ENCODE measurements at regions of chr12 and their contacts with region 1.

Region 1: DNA sequence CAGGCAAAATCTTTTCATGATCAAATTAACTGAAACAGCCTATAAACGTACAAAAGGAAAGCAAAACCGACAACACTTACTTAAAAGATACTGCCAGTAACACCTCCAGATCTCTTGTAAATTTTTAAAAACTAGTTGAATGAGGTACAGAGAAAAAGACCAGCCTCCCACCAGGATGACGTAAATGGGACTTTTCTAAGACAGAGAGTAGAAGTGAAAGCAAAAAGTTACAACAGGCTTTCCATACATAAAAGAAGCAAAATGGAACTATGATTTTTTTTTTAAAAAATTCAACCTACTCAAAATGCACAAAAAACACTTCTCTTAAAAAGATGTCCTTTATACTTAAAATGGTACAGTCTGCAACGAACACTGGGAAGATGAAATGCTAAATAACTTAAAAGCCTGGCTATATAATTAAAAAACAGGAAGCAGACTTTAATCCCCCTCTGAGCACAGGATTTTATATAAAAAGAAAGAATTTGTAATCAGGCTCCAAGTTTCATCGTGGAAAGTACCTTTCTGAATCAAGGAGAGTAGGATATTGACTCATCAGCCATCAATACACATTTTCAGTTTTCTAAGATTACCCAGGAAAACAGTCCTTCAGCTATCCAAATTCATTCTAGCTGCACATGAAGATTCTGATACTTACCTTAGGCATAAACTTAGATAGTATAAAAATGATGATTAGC is 14.2 kb upstream of the MYO1A start:
- DNase-seq: peak in 7 of 9 donors; percentile 67 to 90 (median 85)
- ATAC-seq: peak; percentile 97
- H3K4me3 ChIP-seq: peak overlapping the region; percentile 15
- H3K4me3 Mint-ChIP-seq: peak overlapping the region; percentile 13 to 90 (median 80)
- H3K27ac ChIP-seq: peak overlapping the region; percentile 76
- H3K27ac Mint-ChIP-seq: peak overlapping the region; percentile 79 to 97 (median 91)
- H3K4me1 ChIP-seq: peaks cover 17 to 20% of the 10 kb centered on the region in 2 donors
- H3K4me1 Mint-ChIP-seq: peaks cover 10 to 45% (median 34%) of the 10 kb centered on the region in 7 donors
- H3K27me3 ChIP-seq: no peaks in the 10 kb centered on the region
- H3K27me3 Mint-ChIP-seq: no peaks in the 10 kb centered on the region

Region 2: DNA sequence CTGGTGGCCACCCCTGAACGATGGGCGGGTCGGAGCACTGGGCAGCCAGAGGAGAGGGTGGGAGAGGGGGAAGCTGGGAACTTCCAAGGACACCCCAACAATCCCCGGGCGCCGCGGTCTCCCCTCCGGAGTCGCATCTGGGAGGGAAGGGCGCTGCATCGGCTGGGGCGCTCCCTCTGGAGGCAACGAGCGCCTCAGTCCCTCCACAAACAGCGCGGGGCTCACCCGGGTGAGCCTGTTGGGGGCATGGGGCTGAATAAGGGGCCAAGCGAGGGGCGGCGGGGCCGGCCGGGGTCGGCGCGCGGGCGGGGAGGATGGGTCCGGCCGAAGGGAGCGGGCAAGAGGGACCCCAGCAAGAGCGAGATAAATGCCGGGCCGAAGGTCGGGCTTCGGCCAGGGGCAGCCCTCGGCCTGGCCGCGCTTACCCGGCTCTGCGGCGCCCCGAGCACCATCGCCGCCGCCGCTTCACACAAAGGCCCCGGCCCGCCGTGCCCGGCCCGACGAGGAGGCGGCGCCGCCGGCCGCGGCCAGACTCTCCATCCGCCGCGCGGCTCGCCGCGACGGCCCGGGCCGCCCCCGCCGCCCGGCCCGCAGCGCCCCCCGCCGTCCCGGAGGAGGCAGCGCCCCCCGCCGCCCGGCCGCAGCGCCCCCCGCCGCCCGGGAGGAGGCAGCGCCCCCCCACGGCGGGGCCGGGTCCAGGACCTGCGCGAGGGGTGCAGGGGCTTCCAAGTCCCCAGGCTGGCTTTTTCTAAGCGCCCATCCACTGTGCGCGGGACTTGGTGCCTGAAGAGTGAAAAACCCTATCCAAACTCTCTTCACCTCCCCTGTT is 57.9 kb before region 1 on chr12 and contains the start of gene ZBTB39:
- CTCF ChIA-PET with region 1: interaction called, 241 read pairs
- POLR2A ChIA-PET with region 1: interaction called, 35 read pairs
- intact Hi-C with region 1: loop called (anchors 1 kb)
- DNase-seq: peak; percentile 51 to 84 (median 62)
- ATAC-seq: peak; percentile 91
- H3K4me3 ChIP-seq: peak within 1 kb of the TSS; percentile 63
- H3K4me3 Mint-ChIP-seq: peak within 1 kb of the TSS; percentile 90 to 94 (median 92)
- H3K27ac ChIP-seq: peak within 1 kb of the TSS; percentile 82
- H3K27ac Mint-ChIP-seq: peak within 1 kb of the TSS; percentile 92 to 95 (median 95)
- H3K4me1 ChIP-seq: peaks cover 20 to 46% of the 10 kb centered on the region in 2 donors
- H3K4me1 Mint-ChIP-seq: peaks cover 36 to 80% (median 76%) of the 10 kb centered on the region in 7 donors
- H3K27me3 ChIP-seq: no peaks in the 10 kb centered on the region
- H3K27me3 Mint-ChIP-seq: no peaks in the 10 kb centered on the region
- total RNA-seq, gene ZBTB39: 5.8 to 12.9 (median 10.7) TPM

Region 3: GRCh38 chr12:57031138-57031725 is 32.9 kb before region 1 on chr12:
- CTCF ChIA-PET with region 1: interaction called, 43 read pairs
- POLR2A ChIA-PET with region 1: interaction called, 6 read pairs
- intact Hi-C with region 1: loop called (anchors 1 kb)
- DNase-seq: peak in 6 of 9 donors; percentile 26 to 55 (median 41)
- ATAC-seq: peak; percentile 75
- H3K4me3 ChIP-seq: no peak overlapping the region
- H3K4me3 Mint-ChIP-seq: peak overlapping the region; percentile 18 to 80 (median 66)
- H3K27ac ChIP-seq: no peak overlapping the region
- H3K27ac Mint-ChIP-seq: peak overlapping the region; percentile 44 to 94 (median 69)
- H3K4me1 ChIP-seq: peaks cover 6 to 44% of the 10 kb centered on the region in 2 donors
- H3K4me1 Mint-ChIP-seq: peaks cover 26 to 70% (median 53%) of the 10 kb centered on the region in 7 donors
- H3K27me3 ChIP-seq: no peaks in the 10 kb centered on the region
- H3K27me3 Mint-ChIP-seq: no peaks in the 10 kb centered on the region

Region 4: GRCh38 chr12:57078519-57079404 is 14.6 kb after region 1 on chr12 and contains the start of gene NEMP1:
- CTCF ChIA-PET with region 1: interaction called, 22 read pairs
- POLR2A ChIA-PET with region 1: interaction called, 16 read pairs
- intact Hi-C with region 1: loop called (anchors 1 kb)
- DNase-seq: peak; percentile 65 to 99 (median 98)
- ATAC-seq: peak; percentile 98
- H3K4me3 ChIP-seq: peak within 1 kb of the TSS; percentile 84
- H3K4me3 Mint-ChIP-seq: peak within 1 kb of the TSS; percentile 86 to 99 (median 94)
- H3K27ac ChIP-seq: peak within 1 kb of the TSS; percentile 85
- H3K27ac Mint-ChIP-seq: peak within 1 kb of the TSS; percentile 89 to 99 (median 92)
- H3K4me1 ChIP-seq: peaks cover 6 to 7% of the 10 kb centered on the region in 2 donors
- H3K4me1 Mint-ChIP-seq: peaks cover 0 to 49% (median 25%) of the 10 kb centered on the region in 7 donors
- H3K27me3 ChIP-seq: no peaks in the 10 kb centered on the region
- H3K27me3 Mint-ChIP-seq: no peaks in the 10 kb centered on the region
- total RNA-seq, gene NEMP1: 13.1 to 47.6 (median 29.3) TPM

Region 5: DNA sequence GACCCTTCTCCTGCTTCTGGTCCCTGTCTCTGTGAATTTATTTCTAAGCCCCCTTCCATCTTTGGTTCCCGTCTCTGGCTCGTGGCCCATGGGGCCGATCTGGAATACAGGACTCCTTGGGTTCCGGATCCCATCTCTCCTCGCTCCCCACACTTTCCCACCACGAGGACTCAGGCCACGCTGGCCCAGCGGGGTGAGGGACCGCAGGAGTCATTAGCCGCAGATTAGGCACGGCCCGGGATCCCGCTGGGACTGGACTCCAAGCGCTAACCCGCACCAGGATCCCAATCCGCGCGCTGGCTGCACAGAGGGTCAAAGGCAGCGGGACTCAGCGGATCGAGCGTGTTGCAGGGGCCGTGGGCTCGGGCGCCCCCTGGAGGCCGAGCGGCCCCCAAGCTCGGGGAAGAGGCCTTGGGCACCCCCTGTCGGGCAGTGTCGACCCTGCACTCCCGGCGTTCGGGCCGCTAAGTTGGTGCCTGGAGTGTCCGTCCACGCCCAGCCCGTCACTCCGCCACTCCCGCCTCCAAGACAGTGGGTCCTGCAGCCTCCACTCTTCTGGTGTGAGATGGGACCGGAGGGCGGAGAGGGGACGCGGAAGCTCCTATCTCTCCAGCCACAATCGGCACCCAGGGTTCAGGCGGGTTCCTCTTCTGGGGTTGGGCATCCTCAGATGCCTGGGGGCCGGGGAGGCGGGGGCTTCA is 174.9 kb after region 1 on chr12:
- CTCF ChIA-PET with region 1: interaction called, 3 read pairs
- POLR2A ChIA-PET with region 1: no interaction called
- intact Hi-C with region 1: loop called in 1 of 2 experiments (anchors 5 kb)
- DNase-seq: peak; percentile 72 to 94 (median 85)
- ATAC-seq: peak; percentile 89
- H3K4me3 ChIP-seq: peak overlapping the region; percentile 80
- H3K4me3 Mint-ChIP-seq: peak overlapping the region; percentile 87 to 99 (median 95)
- H3K27ac ChIP-seq: no peak overlapping the region
- H3K27ac Mint-ChIP-seq: peak overlapping the region in 6 of 9 donors; percentile 24 to 83 (median 64)
- H3K4me1 ChIP-seq: peaks cover 45 to 70% of the 10 kb centered on the region in 2 donors
- H3K4me1 Mint-ChIP-seq: peaks cover 52 to 82% (median 66%) of the 10 kb centered on the region in 7 donors
- H3K27me3 ChIP-seq: peaks cover 7 to 18% of the 10 kb centered on the region in 2 donors
- H3K27me3 Mint-ChIP-seq: peaks cover 48 to 72% (median 55%) of the 10 kb centered on the region in 5 donors

Region 6: DNA sequence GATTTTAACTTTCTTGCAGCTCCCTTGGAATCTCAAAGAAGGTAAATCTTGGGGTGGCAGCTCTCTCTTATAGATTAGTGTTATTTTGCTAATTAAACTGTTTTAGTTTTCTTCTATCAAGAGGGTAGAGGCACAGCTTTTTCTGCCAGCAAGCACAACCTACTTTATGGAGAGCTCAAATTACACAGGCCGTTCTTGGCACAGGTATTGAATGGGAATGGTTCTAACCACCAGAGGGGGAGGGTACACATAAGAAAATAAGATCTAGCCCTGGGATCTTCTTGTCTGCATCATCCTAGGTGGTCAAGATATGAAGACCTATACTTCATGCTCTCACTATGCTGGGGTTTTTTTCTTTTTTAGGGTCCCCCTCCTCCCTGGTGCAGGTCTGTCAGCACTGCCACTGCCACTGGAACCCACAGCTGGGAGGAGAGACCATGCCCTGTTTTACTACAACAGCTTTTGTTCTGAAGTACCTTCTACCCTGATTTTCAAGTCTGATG is 235.4 kb after region 1 on chr12:
- CTCF ChIA-PET with region 1: no interaction called
- POLR2A ChIA-PET with region 1: no interaction called
- intact Hi-C with region 1: no loop called
- DNase-seq: no peak
- ATAC-seq: no peak
- H3K4me3 ChIP-seq: no peak overlapping the region
- H3K4me3 Mint-ChIP-seq: no peak overlapping the region
- H3K27ac ChIP-seq: no peak overlapping the region
- H3K27ac Mint-ChIP-seq: peak overlapping the region in 1 of 9 donors; percentile 28
- H3K4me1 ChIP-seq: no peaks in the 10 kb centered on the region
- H3K4me1 Mint-ChIP-seq: peaks cover 0 to 3% (median 0%) of the 10 kb centered on the region in 7 donors
- H3K27me3 ChIP-seq: no peaks in the 10 kb centered on the region
- H3K27me3 Mint-ChIP-seq: no peaks in the 10 kb centered on the region